GM13977 (cell line): ENCODE measurements at regions of chr2 and their contacts with region 1.

Region 1: GRCh38 chr2:10133007-10133647 is 10.6 kb downstream of the RRM2 start:
- DNase-seq: no peak
- CTCF ChIP-seq: no peak

Region 2: GRCh38 chr2:9693211-9693520 is 440.0 kb before region 1 on chr2:
- in situ Hi-C with region 1: no loop called
- DNase-seq: no peak
- CTCF ChIP-seq: no peak

Region 3: GRCh38 chr2:10415057-10415456 is 281.9 kb after region 1 on chr2:
- in situ Hi-C with region 1: loop called (anchors 5 kb)
- DNase-seq: no peak
- CTCF ChIP-seq: no peak